CD8-positive, alpha-beta T cell (primary cell): ENCODE measurements at regions of chr12 and their contacts with region 1.

Region 1: GRCh38 chr12:91877022-91877421 is 268.6 kb downstream of the BTG1 start:
- DNase-seq: peak; percentile 75 to 99 (median 86)
- ATAC-seq: peak; percentile 89
- H3K4me3 ChIP-seq: peak overlapping the region; percentile 16 to 29
- H3K4me3 Mint-ChIP-seq: peak overlapping the region; percentile 72
- H3K27ac ChIP-seq: peak overlapping the region; percentile 80 to 96
- H3K27ac Mint-ChIP-seq: peak overlapping the region; percentile 97
- H3K4me1 ChIP-seq: peaks cover 75% of the 10 kb centered on the region
- H3K4me1 Mint-ChIP-seq: peaks cover 74% of the 10 kb centered on the region
- H3K27me3 ChIP-seq: no peaks in the 10 kb centered on the region
- H3K27me3 Mint-ChIP-seq: no peaks in the 10 kb centered on the region
- CTCF ChIP-seq: no peak

Region 2: GRCh38 chr12:91687052-91688017 is 189.7 kb before region 1 on chr12:
- CTCF ChIA-PET with region 1: no interaction called
- POLR2A ChIA-PET with region 1: no interaction called
- intact Hi-C with region 1: loop called (anchors 5 kb)
- DNase-seq: peak in 4 of 9 experiments; percentile 27 to 80 (median 64)
- ATAC-seq: peak; percentile 89
- H3K4me3 ChIP-seq: no peak overlapping the region
- H3K4me3 Mint-ChIP-seq: peak overlapping the region; percentile 13
- H3K27ac ChIP-seq: no peak overlapping the region
- H3K27ac Mint-ChIP-seq: peak overlapping the region; percentile 60
- H3K4me1 ChIP-seq: peaks cover 23% of the 10 kb centered on the region
- H3K4me1 Mint-ChIP-seq: peaks cover 20% of the 10 kb centered on the region
- H3K27me3 ChIP-seq: no peaks in the 10 kb centered on the region
- H3K27me3 Mint-ChIP-seq: no peaks in the 10 kb centered on the region
- CTCF ChIP-seq: no peak

Region 3: DNA sequence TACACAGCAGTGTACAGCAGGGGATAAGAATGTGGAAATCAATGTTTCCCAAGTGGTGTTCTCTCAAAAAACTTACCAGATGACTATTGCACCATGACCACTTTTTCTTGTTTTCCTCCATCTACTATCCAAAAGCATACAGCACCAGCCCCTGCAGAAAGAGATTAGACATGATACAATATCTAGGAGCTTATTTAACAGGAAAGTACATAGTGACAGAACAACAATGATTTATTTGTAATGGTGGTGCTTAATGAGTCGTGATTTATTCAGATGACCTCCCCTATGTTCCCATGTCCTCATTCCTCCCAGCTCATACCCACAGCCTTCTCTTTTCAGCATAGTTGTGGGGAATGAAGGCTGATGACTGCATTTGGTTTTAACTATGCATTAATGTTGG is 144.9 kb before region 1 on chr12:
- CTCF ChIA-PET with region 1: no interaction called
- POLR2A ChIA-PET with region 1: no interaction called
- intact Hi-C with region 1: no loop called
- DNase-seq: no peak
- ATAC-seq: no peak
- H3K4me3 ChIP-seq: no peak overlapping the region
- H3K4me3 Mint-ChIP-seq: no peak overlapping the region
- H3K27ac ChIP-seq: no peak overlapping the region
- H3K27ac Mint-ChIP-seq: no peak overlapping the region
- H3K4me1 ChIP-seq: no peaks in the 10 kb centered on the region
- H3K4me1 Mint-ChIP-seq: no peaks in the 10 kb centered on the region
- H3K27me3 ChIP-seq: no peaks in the 10 kb centered on the region
- H3K27me3 Mint-ChIP-seq: no peaks in the 10 kb centered on the region
- CTCF ChIP-seq: no peak

Region 4: GRCh38 chr12:91841822-91842221 is 35.2 kb before region 1 on chr12:
- CTCF ChIA-PET with region 1: interaction called, 3 read pairs
- POLR2A ChIA-PET with region 1: interaction called, 3 read pairs
- intact Hi-C with region 1: loop called in 1 of 2 experiments (anchors 5 kb)
- DNase-seq: no peak
- ATAC-seq: no peak
- H3K4me3 ChIP-seq: no peak overlapping the region
- H3K4me3 Mint-ChIP-seq: no peak overlapping the region
- H3K27ac ChIP-seq: no peak overlapping the region
- H3K27ac Mint-ChIP-seq: no peak overlapping the region
- H3K4me1 ChIP-seq: peaks cover 8% of the 10 kb centered on the region
- H3K4me1 Mint-ChIP-seq: peaks cover 13% of the 10 kb centered on the region
- H3K27me3 ChIP-seq: no peaks in the 10 kb centered on the region
- H3K27me3 Mint-ChIP-seq: no peaks in the 10 kb centered on the region
- CTCF ChIP-seq: no peak

Region 5: GRCh38 chr12:91978143-91978542 is 101.1 kb after region 1 on chr12:
- CTCF ChIA-PET with region 1: no interaction called
- POLR2A ChIA-PET with region 1: interaction called, 3 read pairs
- intact Hi-C with region 1: loop called (anchors 1 to 2 kb)
- DNase-seq: peak in 8 of 9 experiments; percentile 7 to 87 (median 48)
- ATAC-seq: peak; percentile 85
- H3K4me3 ChIP-seq: no peak overlapping the region
- H3K4me3 Mint-ChIP-seq: peak overlapping the region; percentile 2
- H3K27ac ChIP-seq: peak overlapping the region; percentile 40 to 49
- H3K27ac Mint-ChIP-seq: peak overlapping the region; percentile 74
- H3K4me1 ChIP-seq: peaks cover 22% of the 10 kb centered on the region
- H3K4me1 Mint-ChIP-seq: peaks cover 60% of the 10 kb centered on the region
- H3K27me3 ChIP-seq: no peaks in the 10 kb centered on the region
- H3K27me3 Mint-ChIP-seq: no peaks in the 10 kb centered on the region
- CTCF ChIP-seq: no peak

Region 6: GRCh38 chr12:92136965-92137721 is 260.1 kb after region 1 on chr12:
- CTCF ChIA-PET with region 1: no interaction called
- POLR2A ChIA-PET with region 1: interaction called, 25 read pairs
- intact Hi-C with region 1: no loop called
- DNase-seq: peak in 1 of 9 experiments; percentile 43
- ATAC-seq: no peak
- H3K4me3 ChIP-seq: peak overlapping the region; percentile 66 to 91
- H3K4me3 Mint-ChIP-seq: peak overlapping the region; percentile 96
- H3K27ac ChIP-seq: peak overlapping the region; percentile 45 to 92
- H3K27ac Mint-ChIP-seq: peak overlapping the region; percentile 99
- H3K4me1 ChIP-seq: peaks cover 47% of the 10 kb centered on the region
- H3K4me1 Mint-ChIP-seq: peaks cover 51% of the 10 kb centered on the region
- H3K27me3 ChIP-seq: no peaks in the 10 kb centered on the region
- H3K27me3 Mint-ChIP-seq: no peaks in the 10 kb centered on the region
- CTCF ChIP-seq: no peak

Region 7: GRCh38 chr12:92408072-92408900 is 531.3 kb after region 1 on chr12:
- CTCF ChIA-PET with region 1: no interaction called
- POLR2A ChIA-PET with region 1: no interaction called
- intact Hi-C with region 1: loop called in 1 of 2 experiments (anchors 5 kb)
- DNase-seq: peak in 5 of 9 experiments; percentile 12 to 74 (median 39)
- ATAC-seq: peak; percentile 26
- H3K4me3 ChIP-seq: no peak overlapping the region
- H3K4me3 Mint-ChIP-seq: no peak overlapping the region
- H3K27ac ChIP-seq: no peak overlapping the region
- H3K27ac Mint-ChIP-seq: peak overlapping the region; percentile 55
- H3K4me1 ChIP-seq: peaks cover 30% of the 10 kb centered on the region
- H3K4me1 Mint-ChIP-seq: peaks cover 55% of the 10 kb centered on the region
- H3K27me3 ChIP-seq: no peaks in the 10 kb centered on the region
- H3K27me3 Mint-ChIP-seq: no peaks in the 10 kb centered on the region
- CTCF ChIP-seq: peak; percentile 54

Region 8: DNA sequence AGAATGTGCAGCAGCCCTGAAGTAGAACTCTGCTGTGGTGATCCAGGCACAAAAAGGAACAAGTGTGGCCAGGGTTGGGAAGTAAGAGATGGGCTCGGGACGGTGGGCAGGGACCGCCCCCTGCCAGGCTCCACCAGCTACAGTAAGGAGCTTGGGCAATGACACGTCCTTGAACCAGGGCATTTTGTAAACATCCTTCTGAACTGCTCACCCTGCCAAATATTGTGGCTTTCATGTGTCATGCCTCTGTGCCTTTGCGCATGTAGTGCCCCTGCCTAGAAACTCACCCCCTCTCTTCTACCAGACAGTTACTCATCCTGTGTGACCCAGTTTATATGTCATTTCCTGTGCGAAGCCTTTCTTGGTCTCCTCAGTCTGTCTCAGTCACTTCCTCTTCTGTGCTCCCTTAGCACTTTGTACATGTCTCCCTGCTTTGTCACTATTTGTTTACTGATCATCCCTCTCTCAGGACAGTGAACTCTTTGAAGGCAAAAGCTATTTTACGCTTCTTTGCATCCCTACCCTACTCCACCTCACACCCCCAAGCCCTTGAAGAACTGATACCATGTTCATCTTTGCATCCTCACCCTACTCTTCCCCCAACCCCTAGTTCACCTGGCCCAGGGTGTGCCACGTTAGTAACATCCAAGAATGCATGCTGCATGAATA is 716.8 kb after region 1 on chr12:
- CTCF ChIA-PET with region 1: no interaction called
- POLR2A ChIA-PET with region 1: no interaction called
- intact Hi-C with region 1: loop called (anchors 1 to 2 kb)
- DNase-seq: peak; percentile 66 to 98 (median 77)
- ATAC-seq: peak; percentile 85
- H3K4me3 ChIP-seq: no peak overlapping the region
- H3K4me3 Mint-ChIP-seq: peak overlapping the region; percentile 44
- H3K27ac ChIP-seq: peak overlapping the region; percentile 73 to 99
- H3K27ac Mint-ChIP-seq: peak overlapping the region; percentile 98
- H3K4me1 ChIP-seq: peaks cover 26% of the 10 kb centered on the region
- H3K4me1 Mint-ChIP-seq: peaks cover 39% of the 10 kb centered on the region
- H3K27me3 ChIP-seq: no peaks in the 10 kb centered on the region
- H3K27me3 Mint-ChIP-seq: no peaks in the 10 kb centered on the region
- CTCF ChIP-seq: no peak